Esophagus muscularis mucosa (tissue), 4 donors: ENCODE measurements at regions of chr20 and their contacts with region 1.

Region 1: GRCh38 chr20:2523919-2524708 is 12.3 kb upstream of the TMC2 start:
- DNase-seq: peak; percentile 96
- H3K4me3 ChIP-seq: peak overlapping the region; percentile 69 to 88 (median 80)
- H3K27ac ChIP-seq: peak overlapping the region; percentile 91 to 96 (median 92)
- H3K4me1 ChIP-seq: peaks cover 3 to 30% (median 25%) of the 10 kb centered on the region in 4 donors
- H3K27me3 ChIP-seq: no peaks in the 10 kb centered on the region
- CTCF ChIP-seq: peak; percentile 90 to 100 (median 98)
- EP300 ChIP-seq: no peak
- POLR2A ChIP-seq: peak; percentile 31

Region 2: DNA sequence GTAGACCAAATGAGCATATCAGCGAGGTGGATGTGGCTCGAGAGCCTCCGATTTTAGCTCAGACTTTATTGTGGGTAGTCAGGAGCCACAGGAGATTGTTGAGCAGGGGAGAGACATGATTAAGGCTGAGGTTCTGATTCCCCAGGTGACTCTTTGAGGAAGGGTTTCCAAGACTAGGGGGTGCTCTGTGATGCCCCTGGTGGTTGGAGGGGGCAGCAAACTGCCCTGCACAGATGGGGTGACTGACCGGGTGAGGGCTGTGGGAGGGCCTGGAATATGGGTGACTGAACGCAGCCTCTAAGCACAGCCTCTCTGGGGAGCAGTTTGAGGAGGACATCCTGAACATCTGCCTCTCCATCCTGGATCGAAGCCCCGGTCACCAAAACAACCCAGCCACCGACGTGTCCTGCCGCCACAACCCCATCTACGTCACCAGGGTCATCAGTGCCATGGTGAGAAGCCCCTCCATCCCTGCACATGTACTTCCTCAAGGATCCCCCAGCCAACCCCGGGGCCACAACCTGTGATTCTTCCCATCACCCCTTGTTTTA is 126.4 kb before region 1 on chr20:
- intact Hi-C with region 1: no loop called
- DNase-seq: no peak
- H3K4me3 ChIP-seq: no peak overlapping the region
- H3K27ac ChIP-seq: no peak overlapping the region
- H3K4me1 ChIP-seq: no peaks in the 10 kb centered on the region
- H3K27me3 ChIP-seq: peaks cover 0 to 17% (median 0%) of the 10 kb centered on the region in 4 donors
- CTCF ChIP-seq: no peak
- EP300 ChIP-seq: no peak
- POLR2A ChIP-seq: no peak

Region 3: GRCh38 chr20:2470423-2471193 is 53.5 kb before region 1 on chr20 and contains the start of gene SNRPB:
- intact Hi-C with region 1: loop called (anchors 5 kb)
- DNase-seq: peak; percentile 98
- H3K4me3 ChIP-seq: peak within 1 kb of the TSS; percentile 78 to 87 (median 82)
- H3K27ac ChIP-seq: peak within 1 kb of the TSS; percentile 91 to 95 (median 94)
- H3K4me1 ChIP-seq: peaks cover 25 to 35% (median 32%) of the 10 kb centered on the region in 4 donors
- H3K27me3 ChIP-seq: no peaks in the 10 kb centered on the region
- CTCF ChIP-seq: peak in 1 of 3 experiments; percentile 4
- EP300 ChIP-seq: no peak
- POLR2A ChIP-seq: peak; percentile 76
- total RNA-seq, gene SNRPB: 127 to 258 (median 216) TPM

Region 4: GRCh38 chr20:2651772-2652723 is 127.9 kb after region 1 on chr20 and contains the start of gene NOP56:
- intact Hi-C with region 1: loop called (anchors 5 kb)
- DNase-seq: peak; percentile 97
- H3K4me3 ChIP-seq: peak within 1 kb of the TSS; percentile 87 to 92 (median 90)
- H3K27ac ChIP-seq: peak within 1 kb of the TSS; percentile 85 to 98 (median 92)
- H3K4me1 ChIP-seq: peaks cover 16 to 36% (median 30%) of the 10 kb centered on the region in 4 donors
- H3K27me3 ChIP-seq: no peaks in the 10 kb centered on the region
- CTCF ChIP-seq: no peak
- EP300 ChIP-seq: no peak
- POLR2A ChIP-seq: peak; percentile 39
- total RNA-seq, gene NOP56: 31.6 to 96.4 (median 62.8) TPM

Region 5: DNA sequence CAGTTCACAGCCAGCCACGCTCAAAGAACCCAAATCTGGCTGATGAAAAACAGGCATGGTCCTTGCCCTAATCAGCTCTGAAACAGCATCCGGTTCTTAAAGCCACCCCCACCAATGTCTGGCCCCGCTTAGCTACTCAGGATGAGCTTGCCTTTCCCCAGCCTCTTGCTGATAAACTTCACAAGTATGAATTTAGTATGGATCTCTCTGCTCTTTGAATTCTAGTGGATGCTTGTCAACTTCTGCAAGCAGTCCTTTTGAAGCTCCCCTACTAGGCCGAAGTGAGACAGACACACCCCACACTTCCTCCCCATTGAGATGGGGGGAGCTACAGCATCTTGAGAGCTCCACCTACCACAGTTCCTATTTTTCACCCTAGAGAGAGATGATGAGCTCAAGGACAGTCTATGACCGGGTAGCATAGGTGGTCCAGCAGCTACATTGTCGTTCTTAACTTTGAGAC is 205.2 kb after region 1 on chr20:
- intact Hi-C with region 1: no loop called
- DNase-seq: peak; percentile 77
- H3K4me3 ChIP-seq: no peak overlapping the region
- H3K27ac ChIP-seq: no peak overlapping the region
- H3K4me1 ChIP-seq: no peaks in the 10 kb centered on the region
- H3K27me3 ChIP-seq: no peaks in the 10 kb centered on the region
- CTCF ChIP-seq: no peak
- EP300 ChIP-seq: no peak
- POLR2A ChIP-seq: no peak

Region 6: DNA sequence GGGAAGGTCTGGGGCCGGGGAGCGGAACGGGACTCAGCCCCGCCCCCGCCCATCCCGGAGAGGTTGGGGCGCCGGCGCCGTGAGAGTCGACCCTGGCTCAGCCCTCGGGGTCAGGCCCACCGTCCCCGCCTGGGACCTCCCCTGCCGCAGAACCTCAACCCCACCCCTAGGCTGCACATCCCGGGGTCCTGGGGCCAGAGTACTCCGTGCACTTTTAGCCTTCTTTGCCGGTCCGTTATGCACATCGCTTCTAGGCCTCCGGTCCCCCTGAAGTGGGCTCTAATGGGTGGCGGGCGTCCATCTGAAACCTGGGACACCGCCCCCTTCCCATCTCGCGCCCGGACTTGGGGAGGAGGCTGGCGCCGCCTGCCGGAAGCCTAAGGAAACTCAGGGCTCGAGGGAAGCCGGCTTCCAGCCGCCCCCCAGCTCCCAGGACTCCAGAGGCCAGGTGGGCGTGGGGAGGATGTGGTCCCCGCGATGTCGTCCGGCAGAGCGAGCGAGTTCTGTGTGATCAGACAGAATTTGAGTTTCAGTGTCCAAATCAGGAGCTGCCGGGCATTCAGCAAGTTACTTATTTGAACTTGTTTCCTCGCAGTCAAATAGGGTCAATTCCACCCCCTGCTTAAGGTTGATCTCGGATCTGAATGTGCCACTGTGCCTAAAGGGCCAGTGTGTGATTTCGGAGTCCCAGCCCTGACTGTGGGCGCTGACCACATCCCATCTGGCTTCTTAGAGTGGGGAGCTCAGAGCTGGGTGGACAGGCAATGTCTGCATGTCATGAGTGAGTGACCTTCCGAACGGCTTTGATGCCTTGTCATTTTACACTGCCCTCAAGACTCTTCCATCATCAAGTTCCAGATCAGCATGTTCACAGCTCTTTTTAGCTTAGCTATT is 228.7 kb after region 1 on chr20:
- intact Hi-C with region 1: loop called (anchors 10 kb)
- DNase-seq: no peak
- H3K4me3 ChIP-seq: peak overlapping the region; percentile 45 to 64 (median 49)
- H3K27ac ChIP-seq: no peak overlapping the region
- H3K4me1 ChIP-seq: peaks cover 20 to 40% (median 36%) of the 10 kb centered on the region in 4 donors
- H3K27me3 ChIP-seq: peaks cover 0 to 86% (median 35%) of the 10 kb centered on the region in 4 donors
- CTCF ChIP-seq: peak; percentile 34 to 61 (median 35)
- EP300 ChIP-seq: no peak
- POLR2A ChIP-seq: no peak